ENCODE measurements at regions of chr1 and their contacts with region 1.

Region 1: GRCh38 chr1:96544831-96545221 is 176.8 kb upstream of the PTBP2 start:
- DNase-seq: no peak
- H3K4me3 ChIP-seq: no peak overlapping the region
- H3K27ac ChIP-seq: no peak overlapping the region
- H3K27me3 ChIP-seq: peaks cover 2% of the 10 kb centered on the region
- CTCF ChIP-seq: no peak

Region 2: GRCh38 chr1:96253246-96254035 is 291.4 kb before region 1 on chr1:
- CTCF ChIA-PET with region 1: no interaction called
- POLR2A ChIA-PET with region 1: interaction called, 10 read pairs
- DNase-seq: no peak
- H3K4me3 ChIP-seq: no peak overlapping the region
- H3K27ac ChIP-seq: no peak overlapping the region
- H3K27me3 ChIP-seq: no peaks in the 10 kb centered on the region
- CTCF ChIP-seq: no peak

Region 3: DNA sequence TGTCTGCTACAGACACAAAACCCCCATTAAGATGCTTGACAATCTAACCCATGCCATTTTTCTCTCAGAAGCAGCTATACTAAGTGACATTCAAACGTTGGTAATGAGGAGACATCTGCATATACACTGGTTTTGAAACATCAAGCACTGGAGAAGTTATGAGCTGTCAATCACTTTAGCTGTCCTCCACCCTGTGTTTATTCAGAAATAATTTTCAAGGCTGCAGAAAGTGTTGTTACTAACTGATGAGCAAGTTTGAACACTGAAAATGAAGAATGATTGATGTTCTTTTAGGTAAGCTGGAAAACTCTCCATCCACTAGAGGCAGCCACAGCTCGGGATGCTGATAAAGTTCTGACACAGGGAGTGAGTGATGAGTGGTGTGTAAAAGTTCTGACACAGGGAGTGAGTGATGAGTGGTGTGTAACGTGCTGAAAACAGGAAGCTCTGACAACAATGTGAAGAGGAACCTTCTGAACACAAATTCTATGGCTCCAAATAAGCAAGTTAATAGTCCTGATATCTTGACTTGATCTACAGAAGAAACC is 20.8 kb before region 1 on chr1:
- CTCF ChIA-PET with region 1: no interaction called
- POLR2A ChIA-PET with region 1: no interaction called
- DNase-seq: no peak
- H3K4me3 ChIP-seq: no peak overlapping the region
- H3K27ac ChIP-seq: no peak overlapping the region
- H3K27me3 ChIP-seq: no peaks in the 10 kb centered on the region
- CTCF ChIP-seq: peak; percentile 11; the same call in 1 of the 2 replicates

Region 4: DNA sequence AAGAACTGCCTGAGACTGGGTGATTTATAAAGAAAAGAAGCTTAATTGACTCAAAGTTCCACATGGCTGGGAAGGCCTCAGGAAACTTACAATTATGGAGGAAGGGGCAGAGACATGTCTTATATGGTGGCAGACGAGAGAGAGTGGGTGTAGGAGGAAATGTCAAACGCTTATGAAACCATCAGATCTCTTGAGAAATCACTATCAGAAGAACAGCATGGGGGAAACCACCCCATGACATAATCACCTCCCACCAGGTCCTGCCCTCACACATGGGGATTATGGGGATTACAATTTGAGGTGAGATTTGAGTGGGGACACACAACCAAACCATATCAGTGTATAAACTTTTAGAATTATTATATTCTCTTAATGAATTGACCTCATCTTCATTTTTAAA is 1711.9 kb after region 1 on chr1:
- CTCF ChIA-PET with region 1: interaction called, 11 read pairs
- POLR2A ChIA-PET with region 1: no interaction called
- DNase-seq: no peak
- H3K4me3 ChIP-seq: no peak overlapping the region
- H3K27ac ChIP-seq: no peak overlapping the region
- H3K27me3 ChIP-seq: no peaks in the 10 kb centered on the region
- CTCF ChIP-seq: no peak

Measured in AG04450 (cell line).